ENCODE measurements at regions of chr20 and their contacts with region 1.

Region 1: GRCh38 chr20:40990542-40991120 is 38.0 kb upstream of the TOP1 start:
- DNase-seq: peak; percentile 74 to 77
- H3K4me3 ChIP-seq: no peak overlapping the region
- H3K27ac ChIP-seq: no peak overlapping the region
- H3K4me1 ChIP-seq: 0 out of 2 replicates have a peak, but pooled peaks cover 9% of the 10 kb centered on the region
- H3K27me3 ChIP-seq: no peaks in the 10 kb centered on the region
- CTCF ChIP-seq: peak; percentile 92

Region 2: DNA sequence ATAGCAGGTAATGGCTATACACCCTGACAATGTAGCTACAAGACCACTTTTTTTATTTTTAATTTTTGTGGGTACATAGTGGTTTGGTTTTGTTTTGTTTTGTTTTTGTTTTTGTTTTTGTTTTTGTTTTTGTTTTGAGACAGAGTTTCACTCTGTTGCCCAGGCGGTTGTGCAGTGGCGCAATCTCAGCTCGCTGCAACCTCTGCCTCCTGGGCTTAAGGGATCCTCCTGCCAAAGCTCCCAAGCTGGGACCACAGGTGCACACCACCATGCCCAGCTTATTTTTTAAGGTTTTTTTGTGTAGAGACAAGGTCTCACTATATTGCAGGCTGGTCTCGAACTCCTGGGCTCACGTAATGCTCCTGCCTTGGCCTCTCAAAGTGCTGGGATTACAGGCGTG is 18.5 kb before region 1 on chr20:
- CTCF ChIA-PET with region 1: interaction called, 17 read pairs
- POLR2A ChIA-PET with region 1: no interaction called
- intact Hi-C with region 1: no loop called
- DNase-seq: no peak
- H3K4me3 ChIP-seq: no peak overlapping the region
- H3K27ac ChIP-seq: no peak overlapping the region
- H3K4me1 ChIP-seq: no peaks in the 10 kb centered on the region
- H3K27me3 ChIP-seq: no peaks in the 10 kb centered on the region
- CTCF ChIP-seq: no peak

Region 3: GRCh38 chr20:41011551-41012067 is 21.0 kb after region 1 on chr20:
- CTCF ChIA-PET with region 1: interaction called, 4 read pairs
- POLR2A ChIA-PET with region 1: interaction called, 18 read pairs
- intact Hi-C with region 1: no loop called
- DNase-seq: peak; percentile 33 to 63
- H3K4me3 ChIP-seq: no peak overlapping the region
- H3K27ac ChIP-seq: no peak overlapping the region
- H3K4me1 ChIP-seq: peaks cover 82% of the 10 kb centered on the region
- H3K27me3 ChIP-seq: no peaks in the 10 kb centered on the region
- CTCF ChIP-seq: no peak

Region 4: GRCh38 chr20:41028348-41029148 is 37.9 kb after region 1 on chr20 and contains the start of gene TOP1:
- CTCF ChIA-PET with region 1: interaction called, 7 read pairs
- POLR2A ChIA-PET with region 1: no interaction called
- intact Hi-C with region 1: loop called (anchors 5 kb)
- DNase-seq: peak; percentile 98 to 100
- H3K4me3 ChIP-seq: peak within 1 kb of the TSS; percentile 90
- H3K27ac ChIP-seq: peak within 1 kb of the TSS; percentile 90
- H3K4me1 ChIP-seq: peaks cover 44% of the 10 kb centered on the region
- H3K27me3 ChIP-seq: no peaks in the 10 kb centered on the region
- CTCF ChIP-seq: no peak
- total RNA-seq, gene TOP1: 39.1 and 55.8 TPM in 2 replicates

Region 5: GRCh38 chr20:41078329-41078728 is 87.7 kb after region 1 on chr20:
- CTCF ChIA-PET with region 1: interaction called, 20 read pairs
- POLR2A ChIA-PET with region 1: no interaction called
- intact Hi-C with region 1: loop called (anchors 1 kb)
- DNase-seq: peak; percentile 45 to 88
- H3K4me3 ChIP-seq: no peak overlapping the region
- H3K27ac ChIP-seq: peak overlapping the region; percentile 25; the same call in 1 of the 2 replicates
- H3K4me1 ChIP-seq: peaks cover 11% of the 10 kb centered on the region
- H3K27me3 ChIP-seq: no peaks in the 10 kb centered on the region
- CTCF ChIP-seq: peak; percentile 79

Region 6: DNA sequence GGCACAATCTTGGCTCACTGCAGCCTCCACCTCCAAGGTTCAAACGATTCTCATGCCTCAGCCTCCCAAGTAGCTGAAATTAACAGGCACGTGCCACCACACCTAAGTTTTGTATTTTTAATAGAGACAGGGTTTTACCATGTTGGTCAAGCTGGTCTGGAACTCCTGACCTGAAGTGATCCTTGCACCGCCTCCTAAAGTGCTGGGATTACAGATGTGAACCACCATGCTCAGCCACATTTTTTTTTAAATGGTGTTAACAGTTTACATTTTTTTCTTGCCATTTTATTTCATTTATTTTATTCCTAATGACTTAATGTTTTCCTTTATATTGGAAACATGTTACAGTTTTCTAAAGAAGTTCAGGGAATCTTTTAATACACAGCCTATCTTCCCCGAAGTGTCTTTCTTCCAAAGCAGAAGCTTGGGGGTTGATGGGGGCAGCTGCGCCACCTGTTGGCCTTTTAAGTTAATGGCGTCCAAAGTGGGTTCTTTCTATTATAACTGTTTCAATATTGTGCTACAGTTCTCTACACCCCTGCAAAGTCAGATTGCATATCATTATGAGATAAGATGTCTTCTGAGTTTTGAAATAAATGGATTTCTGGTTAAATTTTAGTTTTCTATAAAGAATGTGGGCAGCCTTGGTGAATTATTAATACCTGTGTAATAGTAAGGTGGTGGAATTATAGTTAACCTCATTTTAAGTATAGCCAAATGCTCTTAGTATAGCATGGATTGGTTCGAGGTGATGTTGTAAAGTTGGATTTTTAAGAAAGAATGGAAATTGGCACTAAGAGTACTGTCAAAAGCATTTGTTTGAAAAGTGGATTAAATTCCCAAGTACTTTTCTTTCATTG is 104.7 kb after region 1 on chr20:
- CTCF ChIA-PET with region 1: interaction called, 27 read pairs
- POLR2A ChIA-PET with region 1: no interaction called
- intact Hi-C with region 1: loop called (anchors 1 kb)
- DNase-seq: peak; percentile 49 to 50
- H3K4me3 ChIP-seq: no peak overlapping the region
- H3K27ac ChIP-seq: no peak overlapping the region
- H3K4me1 ChIP-seq: no peaks in the 10 kb centered on the region
- H3K27me3 ChIP-seq: no peaks in the 10 kb centered on the region
- CTCF ChIP-seq: peak; percentile 98

Region 7: GRCh38 chr20:41218466-41218865 is 227.8 kb after region 1 on chr20:
- CTCF ChIA-PET with region 1: interaction called, 11 read pairs
- POLR2A ChIA-PET with region 1: no interaction called
- intact Hi-C with region 1: no loop called
- DNase-seq: peak in 1 of 2 experiments; percentile 26
- H3K4me3 ChIP-seq: no peak overlapping the region
- H3K27ac ChIP-seq: no peak overlapping the region
- H3K4me1 ChIP-seq: no peaks in the 10 kb centered on the region; the same call in 1 of the 2 replicates
- H3K27me3 ChIP-seq: no peaks in the 10 kb centered on the region
- CTCF ChIP-seq: no peak